CD4-positive, alpha-beta T cell (primary cell): ENCODE measurements at regions of chr5 and their contacts with region 1.

Region 1: DNA sequence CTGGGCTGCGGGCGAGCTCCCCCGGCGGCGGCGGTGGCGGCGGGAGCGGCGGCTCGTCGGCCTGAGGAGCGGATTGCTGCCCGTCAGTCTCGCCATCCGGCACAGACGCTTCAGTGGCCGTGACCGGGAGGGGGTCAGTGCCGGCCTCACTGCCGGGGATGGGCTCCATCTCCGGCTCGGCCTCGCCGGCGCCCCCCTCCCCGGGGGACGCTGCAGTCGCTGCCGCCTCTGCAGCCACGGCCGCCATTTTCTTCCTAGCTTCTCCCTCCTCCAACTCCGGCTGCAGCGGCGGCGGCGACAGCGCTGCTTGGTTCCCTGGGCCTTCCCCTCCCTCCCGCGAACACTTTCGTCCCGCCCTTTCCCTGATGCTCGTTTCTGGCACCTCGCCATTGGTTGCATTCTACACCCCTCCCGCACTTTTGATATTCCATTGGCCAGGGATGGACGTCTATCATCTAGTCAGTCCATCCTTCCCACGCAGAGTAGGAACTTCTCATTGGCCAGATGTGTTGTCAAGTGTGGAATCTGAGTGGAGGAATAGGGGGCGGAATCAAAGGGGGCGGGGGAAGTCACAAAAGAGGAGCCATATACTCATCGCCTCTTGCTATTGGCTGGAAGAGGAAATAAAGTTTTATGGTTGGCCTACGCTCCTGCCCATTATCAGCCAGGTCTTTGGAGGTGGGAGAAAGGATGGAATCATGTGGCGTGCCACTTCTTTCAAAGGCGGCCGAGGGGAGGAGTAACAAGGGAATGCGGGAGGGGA is at the start of gene PWWP2A:
- DNase-seq: peak; percentile 94 to 100 (median 96)
- ATAC-seq: peak; percentile 92
- H3K4me3 ChIP-seq: peak within 1 kb of the TSS; percentile 70
- H3K4me3 Mint-ChIP-seq: peak within 1 kb of the TSS; percentile 96
- H3K27ac ChIP-seq: peak within 1 kb of the TSS; percentile 68 to 87
- H3K27ac Mint-ChIP-seq: peak within 1 kb of the TSS; percentile 82
- H3K4me1 ChIP-seq: peaks cover 20% of the 10 kb centered on the region
- H3K4me1 Mint-ChIP-seq: peaks cover 20% of the 10 kb centered on the region
- H3K27me3 ChIP-seq: no peaks in the 10 kb centered on the region
- H3K27me3 Mint-ChIP-seq: peaks cover 8% of the 10 kb centered on the region
- CTCF ChIP-seq: no peak
- total RNA-seq, gene PWWP2A: 18.2 to 23.2 TPM

Region 2: DNA sequence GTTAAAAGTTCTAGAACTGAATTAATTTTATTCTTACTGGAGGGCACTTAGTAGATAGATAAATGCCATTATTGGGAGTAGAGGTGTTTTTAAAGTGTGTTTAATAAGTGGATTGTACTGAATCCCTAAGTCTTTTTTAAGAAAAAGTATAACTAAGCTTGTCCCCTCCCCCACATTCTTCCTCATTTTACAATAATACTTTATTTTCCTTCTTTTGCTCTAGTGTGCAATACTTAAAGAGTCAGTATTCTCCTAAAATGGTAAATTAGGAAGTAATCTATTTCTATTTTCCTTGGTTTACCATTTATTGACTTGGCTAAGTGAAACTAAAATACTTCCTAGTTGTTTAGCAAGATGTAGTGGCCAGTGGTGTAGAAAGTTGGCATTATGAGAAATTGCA is 844.6 kb before region 1 on chr5:
- CTCF ChIA-PET with region 1: no interaction called
- POLR2A ChIA-PET with region 1: no interaction called
- intact Hi-C with region 1: loop called in 1 of 2 experiments (anchors 5 kb)
- DNase-seq: no peak
- ATAC-seq: no peak
- H3K4me3 ChIP-seq: no peak overlapping the region
- H3K4me3 Mint-ChIP-seq: no peak overlapping the region
- H3K27ac ChIP-seq: no peak overlapping the region
- H3K27ac Mint-ChIP-seq: no peak overlapping the region
- H3K4me1 ChIP-seq: no peaks in the 10 kb centered on the region
- H3K4me1 Mint-ChIP-seq: peaks cover 25% of the 10 kb centered on the region
- H3K27me3 ChIP-seq: no peaks in the 10 kb centered on the region
- H3K27me3 Mint-ChIP-seq: no peaks in the 10 kb centered on the region
- CTCF ChIP-seq: no peak

Region 3: DNA sequence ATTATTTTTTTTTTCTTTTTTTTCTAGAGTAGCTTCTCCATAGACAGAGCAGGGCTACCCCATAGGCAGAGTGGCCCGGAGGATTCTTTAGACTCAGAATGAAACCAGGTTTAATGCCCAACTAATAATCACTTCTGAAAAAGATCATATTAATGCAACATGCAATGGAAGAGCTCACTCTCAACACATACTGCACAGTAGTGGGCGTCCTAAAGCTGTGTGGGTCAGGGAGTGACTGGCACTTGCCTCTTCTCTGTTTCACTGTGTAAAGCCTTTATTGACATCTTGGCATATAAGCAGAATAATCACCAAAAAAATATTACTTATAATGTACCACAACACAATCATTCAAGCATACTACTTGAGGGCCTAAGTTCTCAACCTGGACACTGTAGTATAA is 11.2 kb before region 1 on chr5:
- CTCF ChIA-PET with region 1: interaction called, 4 read pairs
- POLR2A ChIA-PET with region 1: interaction called, 10 read pairs
- intact Hi-C with region 1: no loop called
- DNase-seq: no peak
- ATAC-seq: no peak
- H3K4me3 ChIP-seq: no peak overlapping the region
- H3K4me3 Mint-ChIP-seq: no peak overlapping the region
- H3K27ac ChIP-seq: no peak overlapping the region
- H3K27ac Mint-ChIP-seq: no peak overlapping the region
- H3K4me1 ChIP-seq: peaks cover 4% of the 10 kb centered on the region
- H3K4me1 Mint-ChIP-seq: peaks cover 36% of the 10 kb centered on the region
- H3K27me3 ChIP-seq: no peaks in the 10 kb centered on the region
- H3K27me3 Mint-ChIP-seq: no peaks in the 10 kb centered on the region
- CTCF ChIP-seq: no peak

Region 4: DNA sequence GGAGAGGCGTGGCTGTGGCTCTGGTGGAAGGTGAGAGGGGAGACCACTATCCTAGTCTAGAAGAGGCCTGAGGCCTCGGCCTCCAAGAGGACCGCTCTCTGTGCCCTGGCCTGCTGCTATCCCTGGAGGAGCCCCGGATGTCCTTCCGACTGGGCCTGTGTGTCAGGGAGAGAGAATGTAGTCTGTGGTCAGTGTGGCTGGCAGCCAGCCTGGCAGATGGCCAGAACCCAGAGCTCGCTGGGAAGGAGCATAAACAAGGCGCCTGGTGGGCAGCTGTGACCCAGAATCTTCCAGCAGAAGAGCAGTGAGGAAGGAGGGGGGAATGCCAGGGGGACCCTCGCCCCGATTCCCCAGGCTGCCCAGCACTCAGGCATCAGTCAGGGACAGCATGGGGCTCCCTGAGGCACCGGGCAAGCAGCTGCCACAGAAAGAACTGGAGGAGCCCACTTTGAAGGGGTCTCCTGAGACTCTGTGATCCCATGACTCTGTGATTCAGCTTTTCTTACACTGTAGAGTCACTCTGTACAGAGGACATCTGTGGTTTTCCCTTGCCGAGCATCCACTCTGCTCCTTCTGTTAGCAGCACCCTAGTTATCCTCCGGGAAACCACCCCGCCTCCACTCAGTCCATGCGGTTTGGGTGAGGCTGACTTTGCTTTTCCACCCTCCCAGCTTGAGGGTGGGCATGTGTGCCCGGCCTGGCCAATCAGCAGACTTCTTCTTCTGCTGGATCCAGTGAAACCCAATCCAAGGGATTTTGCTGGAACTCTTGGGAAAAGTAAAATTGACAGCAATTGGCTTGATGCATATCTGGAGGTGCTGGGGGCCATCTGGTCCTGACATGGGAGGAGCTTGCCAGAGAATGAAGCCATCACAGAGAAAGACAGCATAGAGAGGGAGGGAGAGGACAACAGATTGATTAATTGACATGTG is 46.1 kb after region 1 on chr5:
- CTCF ChIA-PET with region 1: no interaction called
- POLR2A ChIA-PET with region 1: no interaction called
- intact Hi-C with region 1: no loop called
- DNase-seq: no peak
- ATAC-seq: no peak
- H3K4me3 ChIP-seq: no peak overlapping the region
- H3K4me3 Mint-ChIP-seq: no peak overlapping the region
- H3K27ac ChIP-seq: no peak overlapping the region
- H3K27ac Mint-ChIP-seq: no peak overlapping the region
- H3K4me1 ChIP-seq: peaks cover 9% of the 10 kb centered on the region
- H3K4me1 Mint-ChIP-seq: no peaks in the 10 kb centered on the region
- H3K27me3 ChIP-seq: peaks cover 7 to 10% of the 10 kb centered on the region in 2 experiments
- H3K27me3 Mint-ChIP-seq: peaks cover 21% of the 10 kb centered on the region
- CTCF ChIP-seq: no peak